Left ventricle myocardium superior (tissue), 1 donor: ENCODE measurements at regions of chr1 and their contacts with region 1.

Region 1: DNA sequence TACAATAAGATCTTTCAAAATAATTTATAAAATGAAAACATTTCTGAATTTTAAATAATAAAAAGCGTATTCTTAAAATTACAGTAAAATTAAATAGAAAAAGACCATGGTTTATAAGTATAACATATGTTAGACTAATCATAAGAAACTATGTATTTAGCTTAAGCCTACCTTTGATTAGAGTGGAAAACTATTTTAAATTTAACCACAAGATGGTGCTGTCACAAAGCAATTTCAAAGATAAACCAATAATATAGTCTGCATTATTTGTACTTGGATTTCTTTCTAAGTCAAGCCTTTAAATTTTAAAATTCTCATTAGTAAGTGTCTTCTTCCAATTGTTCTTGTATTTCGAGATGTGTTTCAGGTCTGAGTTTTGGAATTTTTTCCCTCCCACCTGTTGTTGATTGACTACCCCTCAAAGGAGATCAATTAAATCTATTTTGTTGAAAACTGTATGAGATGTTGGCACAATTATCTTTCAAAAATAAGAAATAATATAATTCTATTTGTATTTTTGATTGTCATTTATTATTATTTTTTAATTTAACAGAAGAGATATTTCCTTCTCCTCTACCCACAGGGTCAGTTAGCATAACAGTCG is 459.8 kb downstream of the KCNT2 start:
- DNase-seq: no peak
- ATAC-seq: no peak

Region 2: GRCh38 chr1:196309386-196309785 is 160.9 kb after region 1 on chr1:
- intact Hi-C with region 1: loop called (anchors 5 kb)
- DNase-seq: no peak
- ATAC-seq: no peak

Region 3: GRCh38 chr1:196660852-196661251 is 512.4 kb after region 1 on chr1:
- intact Hi-C with region 1: loop called (anchors 10 kb)
- DNase-seq: no peak
- ATAC-seq: peak; percentile 48